ENCODE measurements at regions of chr1 and their contacts with region 1.

Region 1: GRCh38 chr1:184664042-184664655 is 90.5 kb downstream of the EDEM3 start:
- DNase-seq: peak; percentile 61
- H3K4me3 Mint-ChIP-seq: no peak overlapping the region
- H3K27ac Mint-ChIP-seq: no peak overlapping the region
- H3K4me1 Mint-ChIP-seq: peaks cover 1% of the 10 kb centered on the region
- H3K27me3 Mint-ChIP-seq: peaks cover 20% of the 10 kb centered on the region

Region 2: GRCh38 chr1:184242507-184242943 is 421.6 kb before region 1 on chr1:
- CTCF ChIA-PET with region 1: no interaction called
- intact Hi-C with region 1: loop called (anchors 5 kb)
- DNase-seq: no peak
- H3K4me3 Mint-ChIP-seq: no peak overlapping the region
- H3K27ac Mint-ChIP-seq: no peak overlapping the region
- H3K4me1 Mint-ChIP-seq: no peaks in the 10 kb centered on the region
- H3K27me3 Mint-ChIP-seq: peaks cover 10% of the 10 kb centered on the region

Region 3: DNA sequence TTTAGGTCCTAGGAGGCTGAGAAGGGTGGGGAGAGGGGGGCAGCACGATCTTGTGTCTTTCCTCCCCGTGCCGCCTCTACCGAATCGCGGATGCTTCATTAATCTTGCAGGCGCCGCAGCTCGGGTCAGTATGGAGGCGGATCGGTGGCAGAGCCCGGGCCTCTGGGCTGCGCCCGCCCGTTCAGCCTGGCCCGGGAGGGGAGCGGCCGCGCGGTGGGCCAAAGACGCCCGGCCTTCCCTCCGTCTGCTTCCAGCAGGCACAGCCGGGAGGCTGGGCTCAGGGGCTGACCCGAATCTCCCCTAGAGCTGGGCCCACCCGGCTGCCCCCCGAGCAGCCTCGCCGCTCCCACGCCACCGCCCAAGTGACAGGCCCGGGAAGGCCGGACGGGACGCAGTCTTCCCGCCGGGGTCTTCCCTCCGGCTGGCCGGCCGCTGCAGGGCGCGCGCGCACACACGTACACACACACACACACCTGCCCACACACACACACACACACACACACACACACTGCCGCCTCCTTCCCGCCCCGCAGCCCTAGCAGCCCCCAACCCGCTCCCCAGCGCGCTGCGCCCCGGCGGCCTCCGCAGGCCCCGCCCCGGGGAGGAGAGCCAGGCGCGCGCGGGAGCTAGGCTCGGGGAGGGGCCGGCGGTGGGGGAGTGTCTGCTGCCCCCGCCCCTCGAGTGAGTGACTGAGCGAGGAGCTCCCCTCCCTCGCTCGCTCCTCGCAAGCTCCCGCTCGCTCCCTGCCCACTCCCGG is 277.7 kb before region 1 on chr1 and contains the start of gene C1orf21:
- CTCF ChIA-PET with region 1: interaction called, 3 read pairs
- intact Hi-C with region 1: loop called (anchors 2 kb)
- DNase-seq: peak; percentile 80
- H3K4me3 Mint-ChIP-seq: peak within 1 kb of the TSS; percentile 78
- H3K27ac Mint-ChIP-seq: no peak within 1 kb of the TSS
- H3K4me1 Mint-ChIP-seq: peaks cover 14% of the 10 kb centered on the region
- H3K27me3 Mint-ChIP-seq: peaks cover 59% of the 10 kb centered on the region
- total RNA-seq, gene C1orf21: 1.2 to 1.4 TPM

Region 4: DNA sequence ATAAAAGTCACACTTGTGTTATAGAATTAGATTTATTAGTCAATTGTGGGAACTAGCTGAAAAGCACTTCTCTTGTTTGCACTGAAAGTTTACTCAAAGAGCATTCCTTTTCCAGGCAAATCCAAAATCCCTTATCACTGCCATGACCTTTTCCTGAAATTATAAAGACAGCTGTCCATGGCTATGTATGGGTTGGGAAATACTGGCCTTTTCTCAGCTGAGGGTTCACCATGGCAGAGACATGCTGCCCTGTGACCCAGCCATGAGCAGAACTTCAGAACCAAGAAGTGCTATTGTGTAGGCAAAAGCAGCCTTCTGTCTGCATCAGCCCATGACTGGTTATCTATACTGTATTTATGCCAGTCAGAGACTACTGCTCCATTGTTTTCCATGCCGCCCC is 100.3 kb after region 1 on chr1:
- CTCF ChIA-PET with region 1: no interaction called
- intact Hi-C with region 1: no loop called
- DNase-seq: no peak
- H3K4me3 Mint-ChIP-seq: no peak overlapping the region
- H3K27ac Mint-ChIP-seq: no peak overlapping the region
- H3K4me1 Mint-ChIP-seq: no peaks in the 10 kb centered on the region
- H3K27me3 Mint-ChIP-seq: no peaks in the 10 kb centered on the region